Prostate gland (tissue), 2 donors: ENCODE measurements at regions of chr1 and their contacts with region 1.

Region 1: GRCh38 chr1:110460253-110461220 is 9.6 kb downstream of the PROK1 start:
- DNase-seq: peak; percentile 79
- H3K4me3 ChIP-seq: no peak overlapping the region
- H3K27ac ChIP-seq: no peak overlapping the region
- H3K4me1 ChIP-seq: no peaks in the 10 kb centered on the region
- H3K27me3 ChIP-seq: no peaks in the 10 kb centered on the region
- CTCF ChIP-seq: peak; percentile 89 to 97 (median 94)
- POLR2A ChIP-seq: no peak

Region 2: DNA sequence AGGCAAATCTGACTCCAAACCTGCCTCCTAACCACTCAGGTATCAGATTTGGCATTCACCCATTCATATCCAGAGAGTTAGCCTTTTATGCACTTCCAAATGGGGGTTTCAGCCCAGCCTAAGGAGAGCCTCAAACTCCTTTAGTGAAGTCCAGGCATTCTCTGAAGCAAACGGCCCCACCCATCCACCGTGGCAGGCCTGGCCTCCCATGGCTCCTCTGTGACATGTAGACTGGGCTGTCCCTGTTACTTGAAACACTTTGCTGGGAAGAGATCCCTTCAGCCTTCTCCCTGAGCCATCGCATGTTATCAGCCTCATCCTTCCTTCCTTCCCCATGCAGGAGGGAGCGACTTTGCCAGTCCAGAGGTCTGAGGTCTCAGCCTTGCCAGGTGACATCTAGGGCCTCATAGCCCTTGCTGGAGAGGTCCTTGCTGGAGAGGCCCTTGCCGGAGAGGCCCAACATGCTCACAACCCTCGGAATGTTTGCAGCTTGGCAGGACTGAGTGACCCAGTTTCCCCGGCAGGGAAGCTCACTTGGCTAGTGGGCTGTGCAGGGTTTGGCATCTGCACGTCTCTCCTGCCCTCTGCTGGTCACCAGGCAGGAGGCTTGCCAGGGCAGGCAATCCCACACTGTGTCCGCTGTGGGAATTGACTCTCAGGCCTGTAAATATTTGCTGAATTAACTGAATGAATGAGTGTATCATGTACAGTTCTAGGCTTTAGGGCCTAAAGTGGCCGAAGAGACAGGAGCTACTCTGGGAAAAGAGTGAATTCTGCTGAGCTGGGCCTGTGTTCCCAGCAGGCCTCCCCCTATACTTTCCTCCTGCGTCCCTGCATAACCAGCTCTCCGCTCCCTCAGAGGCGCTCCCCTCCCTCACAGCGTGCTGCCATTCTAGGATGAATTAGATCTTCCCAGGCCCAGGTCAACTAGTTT is 148.1 kb before region 1 on chr1:
- intact Hi-C with region 1: loop called (anchors 10 kb)
- DNase-seq: peak; percentile 75
- H3K4me3 ChIP-seq: no peak overlapping the region
- H3K27ac ChIP-seq: no peak overlapping the region
- H3K4me1 ChIP-seq: no peaks in the 10 kb centered on the region
- H3K27me3 ChIP-seq: no peaks in the 10 kb centered on the region
- CTCF ChIP-seq: peak; percentile 88 to 98 (median 94)
- POLR2A ChIP-seq: no peak

Region 3: DNA sequence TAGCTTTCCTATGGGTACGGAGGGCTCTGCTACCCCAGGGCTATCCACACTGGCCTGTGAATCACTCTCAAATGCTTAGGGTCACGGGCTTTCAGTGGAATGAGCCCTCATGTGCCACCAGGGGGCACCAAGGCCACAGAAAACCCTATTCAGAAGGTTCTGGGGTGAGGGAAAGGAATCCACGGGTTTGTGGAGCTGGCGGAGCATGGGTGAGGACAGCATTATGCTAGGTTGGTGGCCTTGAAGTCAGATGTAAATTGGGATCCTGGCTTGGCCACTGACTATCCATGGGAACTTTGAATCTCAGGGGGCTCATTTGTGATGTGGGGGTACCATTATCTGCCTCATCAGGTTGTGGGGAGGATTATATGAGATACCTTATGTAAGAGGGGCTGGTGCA is 48.0 kb before region 1 on chr1:
- intact Hi-C with region 1: loop called (anchors 1 kb)
- DNase-seq: peak; percentile 46
- H3K4me3 ChIP-seq: no peak overlapping the region
- H3K27ac ChIP-seq: no peak overlapping the region
- H3K4me1 ChIP-seq: no peaks in the 10 kb centered on the region
- H3K27me3 ChIP-seq: no peaks in the 10 kb centered on the region
- CTCF ChIP-seq: peak; percentile 26 to 81 (median 70)
- POLR2A ChIP-seq: no peak